HCT116 (cell line): ENCODE measurements at regions of chrX and their contacts with region 1.

Region 1: GRCh38 chrX:76555814-76556213 is 128.3 kb downstream of the MAGEE1 start:
- DNase-seq: peak; percentile 33
- ATAC-seq: peak; percentile 53; the same call in 1 of the 2 replicates
- H3K4me3 ChIP-seq: no peak overlapping the region
- H3K27ac ChIP-seq: no peak overlapping the region
- H3K4me1 ChIP-seq: no peaks in the 10 kb centered on the region
- H3K27me3 ChIP-seq: no peaks in the 10 kb centered on the region
- CTCF ChIP-seq: peak; percentile 10 to 38 (median 32); a peak in 3 of 6 replicates
- POLR2A ChIP-seq: no peak
- RAD21 ChIP-seq: peak; percentile 52

Region 2: DNA sequence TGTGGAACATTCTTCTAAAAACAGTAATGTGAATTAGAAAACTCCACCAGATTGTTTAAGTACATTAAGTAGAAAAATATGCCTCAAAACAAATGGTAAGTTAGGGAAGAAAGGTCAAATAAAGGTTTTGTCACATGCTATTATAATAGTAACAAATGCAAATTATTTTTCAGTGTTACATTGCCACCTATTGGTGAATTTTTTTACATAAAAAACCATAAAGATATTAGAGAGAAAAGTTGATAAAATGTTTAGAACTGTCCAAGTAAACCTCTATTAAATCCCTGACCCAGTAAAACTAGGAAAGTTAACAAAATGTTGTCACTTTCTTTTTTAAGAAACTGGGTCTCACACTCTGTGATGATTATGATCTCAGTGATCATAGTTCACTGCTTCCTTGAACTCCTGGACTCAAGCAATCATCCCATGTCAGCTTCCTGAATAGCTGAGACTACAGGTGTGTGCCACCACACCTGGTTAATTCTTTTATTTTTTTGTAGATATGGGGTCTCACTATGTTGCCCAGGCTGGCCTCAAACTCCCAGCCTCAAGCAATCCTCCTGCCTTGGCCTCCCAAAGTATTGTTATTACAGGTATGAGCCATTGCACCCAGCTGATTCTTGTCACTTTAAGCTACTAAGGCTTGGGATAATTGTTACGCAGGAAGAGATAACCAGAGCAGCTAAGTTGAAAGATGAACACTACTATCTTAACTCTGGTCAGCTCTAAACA is 1072.6 kb after region 1 on chrX:
- CTCF ChIA-PET with region 1: no interaction called
- POLR2A ChIA-PET with region 1: no interaction called
- RAD21 ChIA-PET with region 1: no interaction called
- intact Hi-C with region 1: loop called (anchors 10 kb)
- DNase-seq: no peak
- ATAC-seq: no peak
- H3K4me3 ChIP-seq: no peak overlapping the region
- H3K27ac ChIP-seq: no peak overlapping the region
- H3K4me1 ChIP-seq: no peaks in the 10 kb centered on the region
- H3K27me3 ChIP-seq: no peaks in the 10 kb centered on the region
- CTCF ChIP-seq: peak in 1 of 3 experiments; percentile 27; a peak in 1 of 6 replicates
- POLR2A ChIP-seq: no peak
- RAD21 ChIP-seq: 0 out of 2 replicates have a peak, but pooled peaks have one; percentile 11